Left cardiac atrium (tissue), 4 donors: ENCODE measurements at regions of chr13 and their contacts with region 1.

Region 1: DNA sequence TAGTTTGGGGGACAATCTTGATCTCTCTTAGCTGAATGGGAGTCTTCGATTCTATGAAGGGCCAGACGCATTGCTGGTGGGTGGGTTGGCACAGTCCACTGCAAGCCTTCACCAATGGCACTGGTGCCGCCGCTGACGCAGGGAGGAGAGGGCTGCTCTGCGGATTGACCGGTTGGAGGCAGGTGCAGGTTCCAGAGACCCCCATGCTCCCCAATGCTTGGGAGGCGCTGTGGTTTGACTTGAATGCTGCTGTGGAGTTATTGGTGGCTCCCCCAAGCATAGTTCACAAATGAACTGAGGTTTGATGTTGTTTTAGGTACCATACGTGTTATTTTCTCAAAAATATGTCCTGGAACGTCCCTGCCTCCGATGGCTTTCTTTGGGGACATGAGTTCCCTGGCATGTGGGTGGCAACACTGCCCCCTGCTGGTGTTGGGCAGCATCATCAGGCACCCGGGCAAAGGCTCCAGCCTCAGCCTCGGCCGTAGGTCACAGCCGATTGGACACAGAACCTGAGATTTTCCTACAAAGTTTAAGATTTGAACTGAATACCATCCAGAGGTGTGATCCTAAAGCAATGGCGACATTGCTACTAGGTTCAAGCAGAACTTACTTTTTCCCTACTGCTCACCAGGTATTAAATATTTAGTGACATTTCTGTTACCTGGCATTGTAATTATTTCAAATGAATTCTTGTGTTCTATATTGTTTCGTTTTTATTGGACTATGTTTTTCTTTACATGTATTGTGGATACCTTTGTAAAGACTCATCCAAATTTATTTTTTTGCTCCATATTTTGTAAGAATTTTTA is 95.5 kb downstream of the ANKRD10 start:
- DNase-seq: peak; percentile 85
- ATAC-seq: peak; percentile 91 to 94

Region 2: DNA sequence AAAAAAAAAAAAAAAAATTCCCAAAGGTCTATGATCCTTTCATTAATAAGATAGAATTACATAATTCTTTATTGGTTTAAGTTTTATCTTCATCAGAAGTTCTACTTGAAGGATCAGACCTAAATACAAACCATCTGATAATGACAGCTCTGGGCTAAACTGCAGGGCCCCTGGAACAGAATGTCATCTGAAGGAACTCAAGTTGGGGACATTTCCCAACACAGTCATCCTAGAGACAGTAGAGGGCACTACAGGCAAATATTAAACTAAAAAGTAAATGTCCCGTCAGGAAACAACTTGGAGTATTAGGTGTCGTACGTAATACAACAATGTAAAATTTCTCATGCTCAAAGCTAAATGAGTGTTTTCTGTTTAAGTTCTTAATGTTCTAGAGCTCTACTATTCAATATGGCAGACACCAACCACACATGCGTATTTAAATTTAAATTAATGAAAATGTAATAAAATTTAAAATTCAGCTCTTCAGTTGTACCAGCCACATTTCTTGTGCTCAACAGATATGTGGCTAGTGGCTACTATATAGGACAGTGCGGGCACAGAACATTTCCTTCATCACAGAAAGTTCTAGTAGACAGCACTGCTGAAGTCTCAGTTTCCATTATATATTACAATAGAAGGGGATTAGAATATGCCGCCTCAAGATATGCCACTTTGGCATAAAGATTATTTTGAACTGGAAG is 225.8 kb before region 1 on chr13:
- intact Hi-C with region 1: loop called (anchors 5 kb)
- DNase-seq: no peak
- ATAC-seq: peak; percentile 78 to 89

Region 3: GRCh38 chr13:111111376-111111937 is 292.0 kb after region 1 on chr13:
- intact Hi-C with region 1: no loop called
- DNase-seq: no peak
- ATAC-seq: no peak